ENCODE measurements at regions of chr3 and their contacts with region 1.

Region 1: DNA sequence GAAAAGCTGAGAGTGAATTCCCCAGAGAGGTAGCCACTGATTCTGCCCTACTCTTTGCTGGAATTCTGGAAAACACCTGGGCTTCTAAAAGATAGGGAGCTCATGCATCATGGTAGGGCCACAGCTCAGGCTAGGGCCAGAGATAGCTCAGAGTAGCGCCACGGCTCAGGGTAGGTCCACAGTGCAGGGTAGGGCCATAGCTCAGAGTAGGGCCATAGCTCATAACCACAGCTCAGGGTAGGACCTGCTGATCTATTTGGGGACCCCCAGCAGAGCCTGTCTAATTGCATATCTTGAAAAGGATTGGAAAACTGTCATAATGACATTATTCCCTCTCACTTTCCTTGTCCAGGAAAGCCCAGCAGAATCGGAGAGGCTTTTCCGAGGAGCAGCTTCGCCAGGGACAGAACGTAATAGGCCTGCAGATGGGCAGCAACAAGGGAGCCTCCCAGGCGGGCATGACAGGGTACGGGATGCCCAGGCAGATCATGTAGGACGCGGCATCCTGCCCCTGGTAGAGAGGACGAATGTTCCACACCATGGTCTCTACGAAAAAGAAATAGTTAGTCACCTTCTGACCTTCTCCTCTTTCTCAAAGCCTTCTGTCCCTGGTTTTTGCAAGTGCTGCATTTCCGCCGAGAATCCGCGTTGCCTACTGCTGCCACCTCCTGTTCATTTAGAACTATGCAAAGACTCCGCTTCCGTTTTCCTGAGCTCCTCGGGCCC is 14.5 kb downstream of the TAGLN3 start:
- DNase-seq: peak; percentile 36 to 39
- ATAC-seq: peak; percentile 87 to 94
- H3K4me3 ChIP-seq: peak overlapping the region in 2 of 4 donors; percentile 8 to 29
- H3K27ac ChIP-seq: peak overlapping the region in 1 of 4 donors; percentile 5
- H3K4me1 ChIP-seq: peaks cover 4% of the 10 kb centered on the region in 2 donors
- H3K27me3 ChIP-seq: no peaks in the 10 kb centered on the region
- CTCF ChIP-seq: peak; percentile 24 to 72 (median 53)
- POLR2A ChIP-seq: no peak

Region 2: GRCh38 chr3:111668912-111669488 is 344.2 kb before region 1 on chr3:
- in situ Hi-C with region 1: no loop called
- intact Hi-C with region 1: loop called (anchors 2 kb)
- DNase-seq: no peak
- ATAC-seq: peak; percentile 64 to 74
- H3K4me3 ChIP-seq: no peak overlapping the region
- H3K27ac ChIP-seq: no peak overlapping the region
- H3K4me1 ChIP-seq: peaks cover 5 to 6% of the 10 kb centered on the region in 2 donors
- H3K27me3 ChIP-seq: no peaks in the 10 kb centered on the region
- CTCF ChIP-seq: peak; percentile 46 to 76 (median 69)
- POLR2A ChIP-seq: no peak

Region 3: GRCh38 chr3:111989061-111989678 is 24.1 kb before region 1 on chr3:
- in situ Hi-C with region 1: no loop called
- intact Hi-C with region 1: loop called (anchors 2 kb)
- DNase-seq: no peak
- ATAC-seq: peak; percentile 77 to 86
- H3K4me3 ChIP-seq: no peak overlapping the region
- H3K27ac ChIP-seq: no peak overlapping the region
- H3K4me1 ChIP-seq: no peaks in the 10 kb centered on the region
- H3K27me3 ChIP-seq: no peaks in the 10 kb centered on the region
- CTCF ChIP-seq: peak; percentile 16 to 62 (median 31)
- POLR2A ChIP-seq: no peak

Measured in gastrocnemius medialis (tissue), 4 donors.